ENCODE measurements at regions of chr13 and their contacts with region 1.

Region 1: GRCh38 chr13:94140511-94140910 is 339.0 kb downstream of the DCT start:
- DNase-seq: no peak
- ATAC-seq: no peak

Region 2: DNA sequence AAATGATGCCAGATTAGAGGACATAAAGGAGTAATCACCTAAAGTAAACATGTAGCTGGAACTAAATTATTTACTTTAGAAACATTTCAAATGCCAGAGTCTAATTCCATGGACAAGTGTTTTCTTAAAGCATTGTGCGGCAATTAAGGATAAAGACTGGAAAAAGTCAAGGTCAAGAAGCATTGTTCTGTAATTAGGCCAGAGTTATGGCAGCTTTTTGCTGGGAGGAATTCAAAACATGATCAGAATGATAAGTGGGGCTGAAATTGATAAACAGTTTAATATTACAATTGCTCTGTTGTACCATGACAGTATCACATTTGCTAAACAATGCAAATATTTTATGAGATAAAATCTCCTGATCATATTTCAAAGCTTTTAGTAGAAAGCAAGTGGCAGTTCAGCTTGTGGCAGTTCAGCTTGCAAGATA is 400.2 kb before region 1 on chr13:
- intact Hi-C with region 1: loop called in 1 of 2 experiments (anchors 10 kb)
- DNase-seq: no peak
- ATAC-seq: no peak

Measured in left cardiac atrium (tissue), 4 donors.